ENCODE measurements at regions of chr11 and their contacts with region 1.

Region 1: DNA sequence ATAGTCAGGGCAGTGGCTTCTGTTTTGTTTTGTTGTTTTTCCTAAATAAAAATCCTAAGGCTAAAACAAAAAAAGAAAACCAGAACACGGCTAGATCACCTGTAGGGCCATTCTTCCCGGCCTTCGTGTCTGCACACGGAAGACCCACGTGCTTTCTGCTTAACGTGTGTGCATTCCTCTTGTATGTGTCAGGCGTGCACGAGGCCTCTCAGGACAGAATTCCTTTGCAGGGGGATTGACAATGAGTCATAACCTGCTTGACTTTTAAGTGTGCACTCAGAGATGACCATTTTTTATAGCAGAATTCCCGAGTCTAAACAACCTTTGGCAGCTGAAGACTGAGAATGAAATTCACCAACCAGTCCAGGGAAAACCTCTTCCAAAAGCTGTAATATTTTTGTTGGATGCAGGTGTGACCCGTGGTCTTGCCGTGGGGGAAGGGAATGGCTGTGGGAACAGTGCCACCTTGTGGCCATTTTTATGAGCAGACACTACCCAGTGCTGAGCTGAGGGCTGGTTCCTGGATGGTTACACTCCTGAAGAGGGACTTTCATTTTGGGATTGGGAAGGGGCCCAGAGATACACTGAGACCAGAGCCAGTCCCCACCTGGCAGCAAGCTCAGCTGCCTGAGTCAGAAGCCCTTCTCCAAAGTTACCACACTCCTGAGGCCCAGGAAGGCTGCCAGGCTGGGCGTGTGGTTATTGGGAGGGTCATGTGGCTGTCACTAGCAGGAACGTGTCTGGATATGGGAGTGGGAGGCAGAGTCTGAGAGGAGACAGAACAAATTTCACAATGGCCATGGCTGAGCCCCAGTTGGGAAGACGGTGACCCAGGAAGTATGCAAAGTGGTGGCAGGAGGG is 35.8 kb upstream of the DKK3 start:
- DNase-seq: peak; percentile 55 to 93 (median 82)

Region 2: GRCh38 chr11:11806586-11806985 is 237.6 kb before region 1 on chr11:
- intact Hi-C with region 1: loop called (anchors 10 kb)
- DNase-seq: peak in 9 of 42 donors; percentile 16 to 70 (median 39)

Region 3: GRCh38 chr11:11841723-11842420 is 202.3 kb before region 1 on chr11 and contains the start of gene USP47:
- intact Hi-C with region 1: no loop called
- DNase-seq: peak; percentile 57 to 95 (median 91)

Region 4: GRCh38 chr11:11931461-11932055 is 112.6 kb before region 1 on chr11:
- intact Hi-C with region 1: loop called (anchors 5 kb)
- DNase-seq: peak in 11 of 42 donors; percentile 8 to 62 (median 26)

Region 5: GRCh38 chr11:12281571-12282478 is 237.6 kb after region 1 on chr11:
- intact Hi-C with region 1: loop called (anchors 2 kb)
- DNase-seq: peak; percentile 52 to 97 (median 91)